ENCODE measurements at regions of chr19 and their contacts with region 1.

Region 1: DNA sequence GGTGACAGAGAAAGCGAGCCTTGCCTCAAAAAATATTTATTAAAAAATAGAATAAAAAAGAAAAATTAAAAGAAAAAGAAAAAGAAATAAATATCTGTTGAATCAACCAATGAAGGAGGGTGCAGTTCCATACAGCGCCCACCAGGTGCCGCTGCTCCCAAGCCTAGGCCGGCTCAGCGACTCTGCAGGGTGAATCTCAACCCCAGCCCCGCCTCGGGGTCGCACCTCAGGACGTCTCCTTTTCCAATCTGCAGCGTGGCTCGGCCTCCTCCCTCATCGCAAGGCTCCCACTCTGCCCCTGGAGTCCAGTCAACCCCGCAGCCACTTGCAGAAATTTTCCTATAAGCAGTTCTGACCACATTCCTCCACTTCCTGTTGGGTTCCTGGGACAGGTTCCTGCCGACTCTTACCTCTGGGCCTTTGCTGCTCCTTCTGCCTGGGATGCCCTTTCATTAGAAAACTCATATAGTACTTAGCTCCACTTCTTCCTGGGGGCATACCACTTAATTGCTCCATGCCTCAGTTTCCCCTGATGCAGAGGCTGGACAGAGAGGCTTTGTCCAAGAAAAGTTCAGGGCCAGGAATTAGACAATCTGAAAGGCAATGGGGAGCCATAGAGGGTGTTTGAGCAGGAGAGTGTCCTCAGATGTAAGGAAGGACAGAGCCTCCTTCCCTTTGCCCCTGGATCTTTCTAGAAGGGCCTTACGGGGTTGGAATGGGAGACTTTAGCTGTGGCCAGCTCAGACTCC is 24.3 kb downstream of the NFILZ start:
- H3K4me3 ChIP-seq: peak overlapping the region; percentile 9; the same call in 1 of the 2 replicates
- H3K27ac ChIP-seq: no peak overlapping the region
- H3K4me1 ChIP-seq: no peaks in the 10 kb centered on the region
- CTCF ChIP-seq: peak; percentile 80

Region 2: GRCh38 chr19:8569066-8569771 is 85.5 kb before region 1 on chr19:
- CTCF ChIA-PET with region 1: no interaction called
- POLR2A ChIA-PET with region 1: no interaction called
- H3K4me3 ChIP-seq: no peak overlapping the region
- H3K27ac ChIP-seq: no peak overlapping the region
- H3K4me1 ChIP-seq: no peaks in the 10 kb centered on the region
- CTCF ChIP-seq: no peak

Region 3: GRCh38 chr19:8641908-8642547 is 12.7 kb before region 1 on chr19:
- CTCF ChIA-PET with region 1: interaction called, 11 read pairs
- POLR2A ChIA-PET with region 1: no interaction called
- H3K4me3 ChIP-seq: no peak overlapping the region
- H3K27ac ChIP-seq: no peak overlapping the region
- H3K4me1 ChIP-seq: no peaks in the 10 kb centered on the region
- CTCF ChIP-seq: no peak

Region 4: DNA sequence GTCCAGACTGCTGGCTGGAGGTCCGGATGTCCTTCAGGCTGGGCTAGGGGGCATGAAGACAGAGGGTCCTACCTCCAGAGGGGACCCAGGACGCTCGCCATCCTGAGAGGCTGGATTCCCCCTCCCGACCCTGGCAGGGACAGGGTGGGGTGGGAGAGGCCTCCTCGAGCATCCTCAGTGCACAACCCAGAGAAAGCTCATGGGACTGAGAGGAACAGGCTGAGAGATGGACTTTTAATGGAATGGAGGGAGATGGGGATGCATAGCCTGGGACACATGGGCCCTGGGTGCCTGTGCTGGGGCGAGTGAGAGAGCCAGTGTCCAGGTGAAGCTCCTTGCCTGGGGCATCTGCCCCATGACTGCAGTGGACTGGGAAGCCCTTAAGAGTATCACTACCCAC is 40.7 kb after region 1 on chr19:
- CTCF ChIA-PET with region 1: interaction called, 50 read pairs
- POLR2A ChIA-PET with region 1: no interaction called
- H3K4me3 ChIP-seq: no peak overlapping the region
- H3K27ac ChIP-seq: no peak overlapping the region
- H3K4me1 ChIP-seq: no peaks in the 10 kb centered on the region
- CTCF ChIP-seq: no peak

Region 5: DNA sequence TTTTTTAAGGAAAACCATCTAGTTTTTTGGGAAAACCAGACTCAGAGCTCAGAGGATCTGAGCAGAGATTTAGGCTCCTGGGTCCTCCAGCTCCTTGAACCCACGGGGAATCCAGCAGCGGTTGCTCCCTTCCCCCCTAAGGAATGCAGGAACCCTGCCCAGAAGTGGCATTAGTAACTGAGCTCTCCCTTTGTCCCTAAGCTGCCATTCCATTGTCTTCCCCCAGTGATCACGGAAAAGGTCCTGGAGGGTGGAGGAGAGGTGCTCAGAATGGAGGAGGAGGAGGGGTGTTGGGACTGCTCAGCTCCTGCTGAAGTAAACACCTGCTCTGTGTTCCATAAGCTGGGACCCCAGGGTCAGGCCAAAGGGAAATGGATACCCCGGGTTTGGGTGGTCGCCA is 415.3 kb after region 1 on chr19:
- CTCF ChIA-PET with region 1: no interaction called
- POLR2A ChIA-PET with region 1: no interaction called
- H3K4me3 ChIP-seq: no peak overlapping the region
- H3K27ac ChIP-seq: no peak overlapping the region
- H3K4me1 ChIP-seq: peaks cover under 1% of the 10 kb centered on the region; the same call in 1 of the 2 replicates
- CTCF ChIP-seq: no peak

Measured in HEK293 (cell line).